Activated T-helper 1 cell treated with anti-CD3 and anti-CD28 coated beads, Interleukin-12 subunit alpha, Interleukin-12 subunit beta, Interleukin-2, Interleukin-4 antibody, amounts not matched to agents 30 ng/mL and 10 ng/mL and 1 ng/mL, durations not matched to agents 14 hours and 24 hours and 36 hours (primary cell): ENCODE measurements at regions of chr1 and their contacts with region 1.

Region 1: DNA sequence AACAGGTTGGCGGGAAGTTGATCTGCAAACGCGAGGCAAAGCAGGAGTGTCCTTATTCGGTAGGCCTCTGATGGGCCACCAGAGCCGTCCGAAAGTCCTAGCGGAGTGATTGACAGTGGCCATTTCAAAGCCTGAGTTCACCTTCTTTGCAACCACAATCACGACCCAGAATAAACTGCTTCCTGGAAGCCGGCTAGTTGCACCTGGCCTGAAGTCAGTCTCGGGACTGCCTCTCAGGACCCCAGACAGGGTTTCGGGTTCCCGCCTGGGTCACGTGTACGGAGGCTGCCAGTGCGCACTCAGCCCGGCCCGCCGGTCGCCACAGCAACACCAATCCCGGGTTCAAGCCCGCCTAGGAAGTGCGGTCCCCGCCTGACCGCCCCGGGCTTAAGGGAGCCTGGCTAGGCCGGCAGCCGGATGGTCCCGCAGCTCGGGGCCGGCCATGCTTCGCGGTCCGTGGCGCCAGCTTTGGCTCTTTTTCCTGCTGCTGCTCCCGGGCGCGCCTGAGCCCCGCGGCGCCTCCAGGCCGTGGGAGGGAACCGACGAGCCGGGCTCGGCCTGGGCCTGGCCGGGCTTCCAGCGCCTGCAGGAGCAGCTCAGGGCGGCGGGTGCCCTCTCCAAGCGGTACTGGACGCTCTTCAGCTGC is at the start of gene TOR3A:
- DNase-seq: peak; percentile 77
- H3K4me3 Mint-ChIP-seq: peak within 1 kb of the TSS; percentile 99
- H3K27ac Mint-ChIP-seq: peak within 1 kb of the TSS; percentile 99
- H3K4me1 Mint-ChIP-seq: peaks cover 37% of the 10 kb centered on the region
- H3K27me3 Mint-ChIP-seq: no peaks in the 10 kb centered on the region
- total RNA-seq, gene TOR3A: 41.3 and 44.1 TPM in 2 replicates

Region 2: DNA sequence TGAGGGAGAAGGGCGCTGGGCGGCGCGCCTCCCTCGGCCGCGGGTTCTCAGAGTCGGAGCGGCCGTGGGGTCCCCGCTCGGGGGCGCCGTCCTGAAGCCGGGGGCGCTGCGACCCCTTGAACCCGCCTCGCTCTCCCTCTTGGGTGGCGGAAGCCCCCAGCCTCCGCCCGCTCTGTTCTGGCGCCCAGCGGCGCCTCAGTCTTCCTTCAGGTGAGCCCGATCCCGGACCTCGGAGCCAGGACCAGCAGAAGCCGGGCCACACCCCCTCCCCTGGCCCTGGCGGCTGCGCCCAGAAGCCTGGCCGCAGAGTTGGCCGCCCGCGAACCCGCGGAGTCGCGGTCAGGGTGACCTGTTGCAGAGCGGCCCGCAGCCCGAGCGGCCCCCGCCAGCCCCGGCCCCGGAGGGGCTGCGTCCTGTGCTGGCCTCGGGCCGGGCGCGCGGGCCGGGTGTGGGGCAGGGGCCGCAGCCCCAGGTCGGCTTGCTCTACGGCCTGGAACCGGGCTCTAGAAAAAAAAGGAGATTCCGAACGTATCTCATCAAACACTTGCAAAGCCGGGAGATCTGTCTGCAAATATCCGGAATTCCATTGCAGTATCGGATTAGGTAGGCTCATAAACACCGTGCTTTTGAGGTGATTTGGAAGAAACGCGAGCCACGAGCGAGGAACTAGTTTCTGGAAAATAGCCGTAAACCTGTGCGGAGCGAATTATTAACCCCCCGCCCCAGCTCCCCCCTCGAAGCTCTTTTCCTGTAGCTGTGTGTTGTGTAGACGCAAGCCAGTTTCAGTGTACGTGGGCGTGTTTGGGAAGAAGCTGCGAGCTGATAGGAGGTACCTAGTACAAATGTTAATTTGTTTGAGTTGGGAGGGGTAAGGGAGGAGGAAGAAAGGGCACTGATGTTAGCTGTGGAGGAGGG is 355.9 kb before region 1 on chr1:
- intact Hi-C with region 1: loop called (anchors 2 kb)
- DNase-seq: peak; percentile 35
- H3K4me3 Mint-ChIP-seq: peak overlapping the region; percentile 84
- H3K27ac Mint-ChIP-seq: peak overlapping the region; percentile 43
- H3K4me1 Mint-ChIP-seq: peaks cover 10% of the 10 kb centered on the region
- H3K27me3 Mint-ChIP-seq: peaks cover 31% of the 10 kb centered on the region

Region 3: DNA sequence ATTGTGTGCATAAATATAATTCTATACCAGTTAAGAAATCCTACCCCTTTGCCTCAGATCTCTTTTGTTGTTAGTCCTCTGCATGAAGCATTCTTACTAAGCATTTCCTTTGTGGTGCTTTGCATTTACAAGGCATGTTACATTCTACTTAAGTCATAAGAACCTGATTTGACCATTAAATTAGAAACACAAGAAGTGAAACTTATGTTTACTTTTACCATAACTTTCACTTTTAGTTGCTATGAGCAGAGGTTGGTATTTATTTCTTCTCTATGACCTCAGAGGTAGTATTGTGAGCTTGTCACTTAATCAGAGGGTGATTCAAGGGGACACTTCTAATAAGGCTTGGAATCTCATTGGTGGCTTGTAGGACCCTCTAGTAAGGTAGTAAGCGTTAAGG is 47.1 kb before region 1 on chr1:
- intact Hi-C with region 1: loop called (anchors 1 kb)
- DNase-seq: no peak
- H3K4me3 Mint-ChIP-seq: no peak overlapping the region
- H3K27ac Mint-ChIP-seq: peak overlapping the region; percentile 82
- H3K4me1 Mint-ChIP-seq: peaks cover 80% of the 10 kb centered on the region
- H3K27me3 Mint-ChIP-seq: no peaks in the 10 kb centered on the region

Region 4: GRCh38 chr1:179142889-179143299 is 61.1 kb after region 1 on chr1:
- intact Hi-C with region 1: loop called (anchors 1 kb)
- DNase-seq: no peak
- H3K4me3 Mint-ChIP-seq: peak overlapping the region; percentile 63
- H3K27ac Mint-ChIP-seq: no peak overlapping the region
- H3K4me1 Mint-ChIP-seq: peaks cover 31% of the 10 kb centered on the region
- H3K27me3 Mint-ChIP-seq: no peaks in the 10 kb centered on the region

Region 5: DNA sequence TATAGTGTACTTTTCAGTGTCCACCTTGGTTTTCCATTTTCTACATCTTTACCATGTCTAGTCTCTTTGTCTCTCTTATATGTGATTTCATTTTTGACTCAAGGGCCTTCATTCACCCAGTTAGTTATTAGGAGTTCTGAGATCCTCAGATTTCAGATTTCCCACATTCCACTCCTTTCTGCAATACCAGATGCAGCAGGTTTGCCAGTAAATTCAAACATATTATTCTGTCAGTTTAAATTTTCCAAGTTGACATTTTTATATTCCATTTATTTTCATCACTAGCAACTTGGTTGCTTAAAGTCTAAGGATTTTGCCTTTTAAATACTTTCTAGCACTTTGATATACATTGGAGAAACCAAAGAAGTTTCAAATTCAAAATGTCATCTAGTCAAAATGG is 105.2 kb after region 1 on chr1:
- intact Hi-C with region 1: no loop called
- DNase-seq: no peak
- H3K4me3 Mint-ChIP-seq: no peak overlapping the region
- H3K27ac Mint-ChIP-seq: no peak overlapping the region
- H3K4me1 Mint-ChIP-seq: peaks cover 18% of the 10 kb centered on the region
- H3K27me3 Mint-ChIP-seq: no peaks in the 10 kb centered on the region

Region 6: GRCh38 chr1:179293340-179294327 is 211.8 kb after region 1 on chr1 and contains the start of gene SOAT1:
- intact Hi-C with region 1: loop called (anchors 1 kb)
- DNase-seq: peak; percentile 88
- H3K4me3 Mint-ChIP-seq: peak within 1 kb of the TSS; percentile 99
- H3K27ac Mint-ChIP-seq: peak within 1 kb of the TSS; percentile 96
- H3K4me1 Mint-ChIP-seq: peaks cover 41% of the 10 kb centered on the region
- H3K27me3 Mint-ChIP-seq: no peaks in the 10 kb centered on the region
- total RNA-seq, gene SOAT1: 48.7 and 49.0 TPM in 2 replicates